PC-3 (cell line): ENCODE measurements at regions of chr3 and their contacts with region 1.

Region 1: DNA sequence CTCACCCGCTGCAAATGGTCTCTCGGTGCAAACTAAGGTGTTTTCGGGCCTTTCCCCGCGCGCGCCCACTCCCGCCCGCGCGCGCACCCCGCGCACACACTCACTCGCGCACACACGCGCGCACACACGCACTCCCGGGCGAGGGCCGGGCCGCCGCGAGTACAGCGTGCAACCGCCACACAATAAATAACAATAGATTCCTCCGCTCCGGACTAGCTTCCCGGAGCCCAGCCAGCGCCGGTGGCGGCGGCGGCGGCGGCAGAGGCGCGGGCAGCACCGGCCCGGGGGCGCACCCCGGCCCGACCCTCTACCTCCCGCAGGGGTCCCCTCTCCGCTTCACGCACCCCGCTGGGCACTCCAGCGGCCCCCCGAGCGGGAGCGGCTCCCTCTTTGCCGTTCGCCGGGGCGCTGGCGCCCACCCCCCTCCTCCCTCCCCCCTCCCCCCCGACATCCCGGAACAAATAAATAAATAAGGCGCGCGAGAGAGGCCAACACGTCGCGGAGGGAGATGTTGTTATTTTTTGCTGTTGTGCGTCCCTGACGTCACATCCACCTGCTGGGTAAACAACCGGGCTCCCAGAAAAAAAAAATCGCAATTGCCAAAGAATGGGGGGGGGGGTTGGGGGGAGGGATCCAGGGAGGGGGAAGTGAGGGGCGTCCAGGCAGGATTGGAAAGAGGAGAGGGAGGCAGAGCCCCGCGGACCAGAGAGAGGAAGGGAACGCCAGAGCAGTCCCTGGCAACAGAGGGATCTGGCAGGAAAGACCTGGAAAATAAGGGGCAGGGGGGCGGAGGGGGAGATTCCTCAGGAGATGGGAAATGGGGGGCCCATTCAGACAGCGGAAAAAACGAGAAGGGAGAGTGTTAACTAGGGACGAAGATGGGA is at the start of gene FOXP1:
- DNase-seq: peak; percentile 74
- ATAC-seq: peak; percentile 35
- H3K4me3 ChIP-seq: peak within 1 kb of the TSS; percentile 91
- H3K27ac ChIP-seq: peak within 1 kb of the TSS; percentile 58
- H3K4me1 ChIP-seq: peaks cover 41% of the 10 kb centered on the region
- H3K27me3 ChIP-seq: no peaks in the 10 kb centered on the region
- CTCF ChIP-seq: no peak
- total RNA-seq, gene FOXP1: 35.3 and 36.0 TPM in 2 replicates

Region 2: DNA sequence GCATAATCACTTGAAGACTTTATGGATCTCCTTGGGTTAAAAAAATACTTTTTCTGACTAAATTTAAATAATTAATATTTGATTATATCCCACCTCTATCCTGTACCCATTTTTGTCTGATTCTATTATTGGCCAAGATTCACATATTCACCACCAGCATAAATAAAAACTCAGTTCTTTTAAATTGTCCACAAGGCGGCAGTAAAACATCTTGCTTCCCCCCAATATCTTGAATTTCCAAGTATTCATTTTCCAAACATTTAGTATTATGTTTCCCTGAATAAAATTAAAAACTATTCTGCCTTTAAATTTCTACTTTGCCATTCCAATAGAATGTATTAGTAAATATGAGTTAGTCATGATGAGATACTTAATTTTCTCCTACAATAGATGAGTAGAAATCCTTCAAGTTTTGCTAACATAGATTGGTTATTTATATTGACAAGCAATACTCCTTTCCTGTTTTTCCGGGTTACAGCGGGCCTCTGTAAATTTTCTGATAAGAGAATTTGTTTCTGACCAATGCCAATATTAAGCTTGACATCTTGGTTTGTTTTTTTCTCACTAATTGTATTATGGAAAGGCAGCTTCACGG is 1052.6 kb before region 1 on chr3:
- CTCF ChIA-PET with region 1: no interaction called
- POLR2A ChIA-PET with region 1: no interaction called
- intact Hi-C with region 1: loop called (anchors 10 kb)
- DNase-seq: peak; percentile 26
- ATAC-seq: no peak
- H3K4me3 ChIP-seq: no peak overlapping the region
- H3K27ac ChIP-seq: no peak overlapping the region
- H3K4me1 ChIP-seq: no peaks in the 10 kb centered on the region
- H3K27me3 ChIP-seq: no peaks in the 10 kb centered on the region
- CTCF ChIP-seq: peak; percentile 57

Region 3: DNA sequence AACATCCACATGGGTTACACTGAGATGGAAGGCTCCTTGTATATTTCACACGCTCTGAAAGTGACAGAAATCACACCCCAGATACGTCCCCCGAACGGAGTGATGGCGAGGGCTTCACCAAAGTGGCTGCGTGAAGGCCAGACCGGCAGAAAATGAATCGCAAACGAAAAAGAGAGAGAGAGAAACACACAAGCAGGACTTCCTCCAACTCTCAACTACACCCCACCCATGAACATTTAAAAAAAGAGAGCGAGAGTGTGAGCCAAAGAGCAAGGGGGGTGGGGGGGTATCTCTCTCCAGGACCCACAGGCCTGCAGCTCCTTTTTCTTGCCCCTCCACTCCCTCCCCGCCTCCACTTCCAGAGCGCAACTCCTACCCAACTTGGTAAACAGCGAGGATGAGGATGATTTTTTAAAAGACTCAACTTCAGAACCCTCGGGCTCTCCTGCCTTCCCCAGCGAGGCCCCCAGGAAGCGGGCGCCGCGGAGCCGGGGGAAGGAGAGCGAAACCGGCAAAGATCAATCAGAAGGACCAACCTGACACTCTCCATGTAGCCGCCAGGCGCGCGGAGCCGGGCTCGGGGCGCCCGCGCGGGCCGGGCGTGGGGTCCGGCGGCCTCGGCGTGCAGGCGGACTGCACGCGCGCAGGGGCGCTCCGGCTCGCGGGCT is 519.4 kb before region 1 on chr3:
- CTCF ChIA-PET with region 1: no interaction called
- POLR2A ChIA-PET with region 1: no interaction called
- intact Hi-C with region 1: loop called (anchors 2 kb)
- DNase-seq: peak; percentile 57
- ATAC-seq: peak; percentile 35
- H3K4me3 ChIP-seq: peak overlapping the region; percentile 71
- H3K27ac ChIP-seq: peak overlapping the region; percentile 76
- H3K4me1 ChIP-seq: peaks cover 62% of the 10 kb centered on the region
- H3K27me3 ChIP-seq: no peaks in the 10 kb centered on the region
- CTCF ChIP-seq: no peak

Region 4: DNA sequence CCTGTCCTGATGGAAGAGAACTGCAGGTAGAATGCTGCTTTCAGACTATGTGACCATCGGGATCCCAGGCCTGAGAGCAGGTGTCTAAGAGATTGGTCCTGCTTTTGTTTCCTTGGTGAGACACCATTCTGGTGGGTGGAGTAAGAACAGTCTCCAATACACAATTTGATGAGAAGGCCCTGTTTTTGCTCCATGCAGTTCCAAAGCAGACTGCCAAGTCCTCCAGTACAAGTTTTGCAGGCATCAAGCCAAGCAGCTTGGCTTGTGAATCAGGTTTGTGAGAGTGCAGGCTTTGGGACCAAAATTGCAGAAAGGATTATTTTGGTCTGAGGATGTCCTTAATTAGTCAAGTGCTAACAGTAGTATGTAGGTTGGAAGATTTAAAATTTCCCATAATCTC is 381.9 kb before region 1 on chr3:
- CTCF ChIA-PET with region 1: no interaction called
- POLR2A ChIA-PET with region 1: no interaction called
- intact Hi-C with region 1: loop called (anchors 10 kb)
- DNase-seq: peak; percentile 26
- ATAC-seq: no peak; the same call in 1 of the 2 replicates
- H3K4me3 ChIP-seq: no peak overlapping the region
- H3K27ac ChIP-seq: no peak overlapping the region
- H3K4me1 ChIP-seq: peaks cover 15% of the 10 kb centered on the region
- H3K27me3 ChIP-seq: no peaks in the 10 kb centered on the region
- CTCF ChIP-seq: no peak

Region 5: DNA sequence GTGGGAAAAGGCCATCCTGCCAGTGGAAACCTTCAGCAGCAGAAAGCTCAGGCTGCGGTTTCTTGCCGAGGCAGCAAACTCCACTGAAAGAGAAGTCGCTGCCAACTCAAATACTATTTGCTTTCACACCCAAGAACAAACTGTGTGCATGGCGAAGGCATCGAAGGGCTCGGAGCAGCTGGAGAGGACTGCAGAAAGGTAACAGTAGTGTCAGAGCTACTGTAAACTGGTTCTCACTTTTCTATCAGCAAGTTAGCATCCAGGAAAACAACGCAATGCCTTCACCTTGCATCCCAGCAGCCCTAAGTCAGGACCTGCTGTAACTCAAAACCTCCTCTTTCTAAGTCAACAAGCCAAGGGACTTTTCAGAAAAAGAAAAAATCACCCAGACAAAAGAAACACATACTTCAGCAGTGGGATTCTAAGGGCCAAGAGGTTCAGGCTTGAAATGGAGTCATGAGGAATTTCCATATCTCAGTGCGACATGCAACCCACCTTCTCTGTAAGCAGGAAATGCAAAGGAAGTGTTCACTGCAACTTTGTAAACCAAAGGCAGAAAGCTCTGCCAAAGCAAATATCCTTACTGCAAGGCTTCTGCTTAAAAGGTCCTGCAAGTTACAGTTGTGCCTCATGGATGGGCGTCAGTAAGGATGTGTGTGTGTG is 193.8 kb before region 1 on chr3:
- CTCF ChIA-PET with region 1: no interaction called
- POLR2A ChIA-PET with region 1: no interaction called
- intact Hi-C with region 1: loop called (anchors 1 kb)
- DNase-seq: peak; percentile 65
- ATAC-seq: peak; percentile 81
- H3K4me3 ChIP-seq: peak overlapping the region; percentile 52
- H3K27ac ChIP-seq: peak overlapping the region; percentile 5; the same call in 1 of the 2 replicates
- H3K4me1 ChIP-seq: peaks cover 15% of the 10 kb centered on the region
- H3K27me3 ChIP-seq: no peaks in the 10 kb centered on the region
- CTCF ChIP-seq: no peak

Region 6: GRCh38 chr3:71504250-71505036 is 79.4 kb before region 1 on chr3:
- CTCF ChIA-PET with region 1: no interaction called
- POLR2A ChIA-PET with region 1: no interaction called
- intact Hi-C with region 1: loop called (anchors 2 kb)
- DNase-seq: peak; percentile 92
- ATAC-seq: peak; percentile 97
- H3K4me3 ChIP-seq: peak overlapping the region; percentile 57
- H3K27ac ChIP-seq: peak overlapping the region; percentile 89
- H3K4me1 ChIP-seq: peaks cover 22% of the 10 kb centered on the region
- H3K27me3 ChIP-seq: no peaks in the 10 kb centered on the region
- CTCF ChIP-seq: no peak

Region 7: DNA sequence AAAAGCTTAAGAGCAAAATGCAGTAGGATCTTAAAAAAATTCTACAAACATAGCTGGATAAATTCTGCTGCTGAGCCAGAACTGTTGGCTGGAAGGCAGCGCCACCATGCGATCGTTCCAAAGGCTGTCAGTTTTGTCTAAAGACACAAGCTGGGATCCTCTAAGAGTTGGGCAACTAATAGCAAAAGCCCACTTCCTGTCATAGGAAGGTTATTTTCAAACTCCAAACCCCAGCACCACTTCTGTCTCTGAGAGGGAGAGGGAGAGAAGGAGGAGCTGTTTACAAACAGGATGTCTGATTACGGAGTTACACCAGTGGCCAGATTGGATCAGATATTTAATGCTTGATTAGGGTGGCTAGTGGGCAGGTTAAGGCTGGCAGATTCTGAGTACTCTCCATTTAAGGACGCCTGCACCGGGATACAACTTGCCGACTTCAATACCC is 97.4 kb after region 1 on chr3:
- CTCF ChIA-PET with region 1: no interaction called
- POLR2A ChIA-PET with region 1: no interaction called
- intact Hi-C with region 1: loop called (anchors 2 kb)
- DNase-seq: peak; percentile 80
- ATAC-seq: peak; percentile 74
- H3K4me3 ChIP-seq: peak overlapping the region; percentile 42; the same call in 1 of the 2 replicates
- H3K27ac ChIP-seq: peak overlapping the region; percentile 7; the same call in 1 of the 2 replicates
- H3K4me1 ChIP-seq: peaks cover 25% of the 10 kb centered on the region
- H3K27me3 ChIP-seq: no peaks in the 10 kb centered on the region
- CTCF ChIP-seq: peak; percentile 96